Activated CD8-positive, alpha-beta T cell treated with anti-CD3 and anti-CD28 coated beads, Interleukin-2, amount 10 ng/mL, durations not matched to agents 7 days and 5 days (primary cell): ENCODE measurements at regions of chr4 and their contacts with region 1.

Region 1: GRCh38 chr4:82428969-82429727 is 1.1 kb downstream of the HNRNPDL start:
- DNase-seq: peak; percentile 94
- ATAC-seq: peak; percentile 52
- H3K4me3 Mint-ChIP-seq: peak overlapping the region; percentile 99
- H3K27ac Mint-ChIP-seq: peak overlapping the region; percentile 99
- H3K4me1 Mint-ChIP-seq: peaks cover 54% of the 10 kb centered on the region
- H3K27me3 Mint-ChIP-seq: no peaks in the 10 kb centered on the region

Region 2: DNA sequence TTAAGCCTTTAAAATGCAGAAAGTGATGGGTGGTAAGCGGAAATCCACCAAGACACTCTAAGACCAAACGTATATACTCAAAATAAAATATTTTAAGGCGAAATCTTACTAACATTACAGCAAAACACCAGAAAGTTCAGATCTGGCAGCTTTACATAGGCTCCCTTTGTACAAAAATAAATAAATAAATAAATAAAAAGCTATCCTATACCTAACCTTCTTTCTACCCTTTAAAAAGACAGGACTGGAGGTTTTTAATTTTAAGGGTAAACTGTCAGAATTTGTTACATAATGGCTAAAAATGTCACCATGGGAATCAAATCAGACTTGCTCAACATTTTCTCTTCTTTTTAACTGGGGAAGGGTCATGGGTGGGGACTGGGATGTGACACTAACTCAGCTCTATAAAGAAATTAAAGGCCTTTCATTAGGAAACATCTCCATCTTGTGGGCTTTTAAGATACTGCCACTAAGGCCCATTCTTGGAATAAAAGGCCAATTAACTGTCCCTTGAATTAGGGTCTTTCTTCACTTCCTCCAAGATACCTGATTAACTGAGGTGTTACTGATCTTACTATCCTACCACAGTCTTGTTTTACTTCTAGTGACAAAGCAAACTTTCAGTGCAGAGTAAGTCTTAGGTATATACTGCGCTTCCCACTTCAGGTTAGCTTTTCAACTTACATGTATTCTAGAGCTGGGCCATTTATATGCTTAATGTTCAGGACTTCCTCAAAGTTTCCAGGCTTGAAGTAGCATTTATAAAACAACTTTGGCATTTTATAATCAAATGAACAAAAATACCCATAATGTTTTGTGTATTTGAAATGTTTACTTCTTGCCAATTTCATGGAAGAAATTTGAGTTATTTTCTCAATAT is 68.6 kb before region 1 on chr4:
- CTCF ChIA-PET with region 1: interaction called, 21 read pairs
- POLR2A ChIA-PET with region 1: interaction called, 10 read pairs
- DNase-seq: no peak
- ATAC-seq: peak; percentile 51
- H3K4me3 Mint-ChIP-seq: no peak overlapping the region
- H3K27ac Mint-ChIP-seq: peak overlapping the region; percentile 6
- H3K4me1 Mint-ChIP-seq: peaks cover 87% of the 10 kb centered on the region
- H3K27me3 Mint-ChIP-seq: no peaks in the 10 kb centered on the region

Region 3: DNA sequence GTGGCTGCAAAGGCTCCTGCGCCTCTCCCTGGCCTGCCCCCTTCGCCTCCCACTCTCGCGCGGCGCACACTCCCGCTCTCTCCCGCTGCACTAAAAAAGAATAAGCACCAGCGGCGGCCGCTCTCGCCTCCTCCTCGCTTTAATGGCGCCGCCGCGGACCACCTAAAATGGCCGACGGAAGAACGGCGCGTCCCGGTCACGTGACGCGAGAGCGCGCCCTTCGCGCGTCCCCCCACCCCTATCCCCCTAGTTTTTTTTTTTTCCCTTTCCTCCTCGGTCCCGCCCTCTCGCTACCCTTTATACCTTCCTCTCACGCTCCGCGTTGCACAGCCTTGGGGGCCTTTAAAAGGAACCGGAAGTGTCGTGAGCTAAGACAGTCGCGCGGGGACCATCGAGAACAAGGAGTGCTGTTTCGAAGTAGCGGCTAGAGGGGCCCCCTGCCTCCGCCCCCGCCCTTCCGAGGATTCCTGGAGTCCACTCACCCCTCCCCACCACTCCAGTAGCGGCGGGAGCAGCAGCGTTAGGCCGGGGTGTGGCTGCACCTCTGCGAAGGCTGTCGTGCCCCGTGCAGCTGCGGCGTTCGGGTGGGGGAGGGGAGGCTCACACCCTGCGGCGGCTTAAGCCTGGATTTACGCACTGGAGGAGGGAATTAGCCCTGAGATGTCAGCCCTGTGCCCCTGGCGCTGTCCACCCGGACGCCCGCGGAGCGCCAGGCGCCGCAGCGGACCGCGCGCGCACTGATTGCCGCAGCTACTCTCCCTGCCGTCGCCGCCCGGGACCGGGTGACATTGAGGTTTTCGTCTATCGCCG is 55.1 kb before region 1 on chr4 and contains the start of gene HNRNPD:
- CTCF ChIA-PET with region 1: interaction called, 30 read pairs
- POLR2A ChIA-PET with region 1: interaction called, 120 read pairs
- DNase-seq: peak; percentile 98
- ATAC-seq: peak; percentile 92
- H3K4me3 Mint-ChIP-seq: peak within 1 kb of the TSS; percentile 98
- H3K27ac Mint-ChIP-seq: peak within 1 kb of the TSS; percentile 96
- H3K4me1 Mint-ChIP-seq: peaks cover 39% of the 10 kb centered on the region
- H3K27me3 Mint-ChIP-seq: no peaks in the 10 kb centered on the region
- total RNA-seq, gene HNRNPD: 405 to 406 TPM

Region 4: GRCh38 chr4:82379964-82380733 is 49.0 kb before region 1 on chr4:
- CTCF ChIA-PET with region 1: interaction called, 12 read pairs
- POLR2A ChIA-PET with region 1: interaction called, 120 read pairs
- DNase-seq: no peak
- ATAC-seq: no peak
- H3K4me3 Mint-ChIP-seq: no peak overlapping the region
- H3K27ac Mint-ChIP-seq: no peak overlapping the region
- H3K4me1 Mint-ChIP-seq: peaks cover 18% of the 10 kb centered on the region
- H3K27me3 Mint-ChIP-seq: peaks cover 3% of the 10 kb centered on the region

Region 5: DNA sequence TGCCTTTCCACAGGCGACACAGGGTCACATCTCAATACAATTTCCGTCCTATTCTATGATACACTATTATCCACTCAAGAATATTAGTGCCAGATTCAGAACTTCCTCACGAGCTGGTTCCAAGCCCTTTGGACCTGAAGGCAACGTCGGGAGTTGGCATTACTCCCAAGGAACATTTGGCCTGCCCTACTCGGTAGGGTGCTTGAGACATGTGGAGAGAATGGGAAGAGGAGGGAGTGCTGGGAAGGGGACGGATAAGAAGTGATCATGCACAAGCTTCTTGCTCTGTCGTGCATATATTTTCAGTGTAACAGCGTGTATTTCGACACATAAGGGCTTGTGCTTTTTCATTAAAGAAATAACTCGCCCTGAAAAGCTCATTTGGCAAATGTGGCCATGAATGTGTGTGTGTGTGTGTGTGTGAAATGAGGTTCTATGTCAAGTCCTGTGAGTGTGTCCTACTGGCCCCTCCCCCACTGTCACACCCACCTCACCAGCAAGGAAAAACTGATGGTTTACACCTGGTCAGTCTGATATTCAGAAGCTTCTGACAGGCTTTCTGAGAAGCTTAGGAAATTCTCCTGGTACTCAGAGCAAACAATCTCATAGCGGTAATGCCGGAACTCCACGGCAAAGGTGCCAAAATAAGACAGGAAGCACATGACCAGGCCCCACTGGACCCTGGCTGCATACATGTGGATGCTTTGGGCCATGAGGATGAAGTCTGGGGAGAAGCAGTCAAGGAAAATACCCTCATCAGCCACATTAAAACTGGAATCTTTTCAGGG is 56.0 kb after region 1 on chr4:
- CTCF ChIA-PET with region 1: no interaction called
- POLR2A ChIA-PET with region 1: no interaction called
- DNase-seq: no peak
- ATAC-seq: no peak
- H3K4me3 Mint-ChIP-seq: no peak overlapping the region
- H3K27ac Mint-ChIP-seq: no peak overlapping the region
- H3K4me1 Mint-ChIP-seq: no peaks in the 10 kb centered on the region
- H3K27me3 Mint-ChIP-seq: no peaks in the 10 kb centered on the region

Region 6: DNA sequence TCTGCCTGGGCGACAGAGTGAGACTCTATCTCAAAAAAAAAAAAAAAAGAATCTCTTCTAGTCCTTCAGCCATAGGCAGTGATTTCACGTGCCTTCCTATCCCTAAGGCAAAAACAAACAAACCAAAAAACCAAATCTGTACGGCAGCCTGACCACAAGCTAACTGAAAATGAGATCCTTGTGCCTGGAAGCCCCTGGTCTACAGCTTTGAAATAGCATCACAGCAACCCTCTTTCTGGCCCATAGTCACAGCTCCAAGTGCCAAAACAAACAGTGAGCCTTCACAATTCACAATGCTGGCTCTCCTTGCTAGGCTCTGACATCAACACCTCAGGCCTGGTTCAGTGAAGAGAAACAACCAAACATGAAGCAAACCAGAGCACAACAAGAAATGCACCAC is 86.6 kb after region 1 on chr4:
- CTCF ChIA-PET with region 1: no interaction called
- POLR2A ChIA-PET with region 1: no interaction called
- DNase-seq: no peak
- ATAC-seq: no peak
- H3K4me3 Mint-ChIP-seq: no peak overlapping the region
- H3K27ac Mint-ChIP-seq: no peak overlapping the region
- H3K4me1 Mint-ChIP-seq: no peaks in the 10 kb centered on the region
- H3K27me3 Mint-ChIP-seq: peaks cover 7% of the 10 kb centered on the region

Region 7: DNA sequence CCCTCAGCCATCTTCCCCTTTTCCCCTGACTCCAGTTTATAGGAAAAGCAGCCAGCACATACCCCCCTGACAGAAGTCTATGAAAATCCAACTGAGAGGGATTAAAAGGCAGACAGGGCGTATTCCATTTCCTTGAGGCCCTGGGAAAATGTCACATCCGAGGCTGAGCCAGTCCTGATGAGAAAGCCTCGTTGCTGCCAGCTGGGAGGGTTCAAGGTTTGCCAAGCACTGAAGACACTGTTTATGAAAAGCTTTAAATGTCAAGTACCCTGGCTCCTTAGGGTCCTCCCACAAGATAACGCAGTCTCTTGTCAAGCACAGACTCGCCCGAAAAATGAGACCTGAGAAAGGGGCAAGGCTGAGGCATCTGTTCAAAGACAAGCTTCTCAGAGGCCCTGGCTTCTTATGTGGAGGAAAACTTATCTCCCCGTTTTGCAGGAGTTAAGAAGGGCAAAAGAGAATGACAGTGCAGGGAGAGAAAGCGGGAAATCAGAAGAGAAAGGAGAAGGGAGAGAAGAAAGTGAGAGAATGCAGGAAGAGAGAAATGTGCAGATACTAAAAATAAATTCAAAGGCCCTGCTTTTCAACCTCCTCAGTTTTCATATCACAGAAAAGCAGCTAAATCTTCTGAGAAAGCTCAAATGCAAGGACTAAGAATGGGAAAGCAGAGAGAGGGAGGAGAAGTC is 324.7 kb after region 1 on chr4:
- CTCF ChIA-PET with region 1: no interaction called
- POLR2A ChIA-PET with region 1: no interaction called
- DNase-seq: no peak
- ATAC-seq: no peak
- H3K4me3 Mint-ChIP-seq: no peak overlapping the region
- H3K27ac Mint-ChIP-seq: no peak overlapping the region
- H3K4me1 Mint-ChIP-seq: no peaks in the 10 kb centered on the region
- H3K27me3 Mint-ChIP-seq: peaks cover 7% of the 10 kb centered on the region